GM13977 (cell line): ENCODE measurements at regions of chr17 and their contacts with region 1.

Region 1: DNA sequence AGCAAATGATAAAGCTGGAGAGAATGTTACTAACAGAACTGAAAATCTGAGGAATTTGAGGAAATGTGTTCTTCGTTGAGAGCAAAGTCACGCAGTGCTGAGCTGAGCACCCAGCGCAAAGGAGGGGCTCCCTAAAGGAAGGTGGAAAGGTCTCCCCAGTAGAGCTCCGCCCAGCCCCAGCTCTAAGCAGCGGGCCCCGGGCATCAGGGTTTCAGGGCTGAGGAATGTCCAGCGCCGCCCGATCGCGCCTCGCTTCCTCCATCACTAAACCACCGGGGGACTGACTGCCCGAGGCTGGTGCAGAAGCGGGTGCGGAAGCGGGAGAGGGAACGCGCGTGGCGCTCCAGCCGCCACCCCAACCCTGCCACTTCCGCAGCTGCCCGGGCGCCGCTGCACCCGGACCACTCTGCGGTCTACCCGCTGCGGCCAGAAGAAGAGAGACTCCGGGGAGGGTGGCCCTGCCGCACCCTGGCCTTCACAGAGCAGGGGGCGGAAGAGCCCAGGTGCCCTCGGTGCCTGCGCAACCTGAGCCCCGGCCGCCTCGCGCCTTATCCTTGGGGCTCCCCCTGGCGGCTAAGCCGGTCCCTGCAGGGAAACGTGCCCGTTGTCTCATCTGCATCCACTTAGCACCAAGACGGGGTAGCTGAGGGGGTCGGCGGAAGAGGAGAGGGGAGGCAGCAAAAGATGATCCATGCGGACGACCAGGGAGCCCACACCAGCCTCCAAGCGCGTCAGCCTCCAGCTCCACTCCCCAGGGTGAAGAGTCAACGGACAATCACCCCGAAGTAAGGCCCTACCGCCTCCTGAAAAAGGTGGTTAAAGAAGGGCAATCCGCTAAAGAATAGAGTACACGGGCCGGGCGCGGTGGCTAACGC is 12.4 kb upstream of the GUCY2D start:
- DNase-seq: peak; percentile 91
- CTCF ChIP-seq: peak; percentile 99

Region 2: DNA sequence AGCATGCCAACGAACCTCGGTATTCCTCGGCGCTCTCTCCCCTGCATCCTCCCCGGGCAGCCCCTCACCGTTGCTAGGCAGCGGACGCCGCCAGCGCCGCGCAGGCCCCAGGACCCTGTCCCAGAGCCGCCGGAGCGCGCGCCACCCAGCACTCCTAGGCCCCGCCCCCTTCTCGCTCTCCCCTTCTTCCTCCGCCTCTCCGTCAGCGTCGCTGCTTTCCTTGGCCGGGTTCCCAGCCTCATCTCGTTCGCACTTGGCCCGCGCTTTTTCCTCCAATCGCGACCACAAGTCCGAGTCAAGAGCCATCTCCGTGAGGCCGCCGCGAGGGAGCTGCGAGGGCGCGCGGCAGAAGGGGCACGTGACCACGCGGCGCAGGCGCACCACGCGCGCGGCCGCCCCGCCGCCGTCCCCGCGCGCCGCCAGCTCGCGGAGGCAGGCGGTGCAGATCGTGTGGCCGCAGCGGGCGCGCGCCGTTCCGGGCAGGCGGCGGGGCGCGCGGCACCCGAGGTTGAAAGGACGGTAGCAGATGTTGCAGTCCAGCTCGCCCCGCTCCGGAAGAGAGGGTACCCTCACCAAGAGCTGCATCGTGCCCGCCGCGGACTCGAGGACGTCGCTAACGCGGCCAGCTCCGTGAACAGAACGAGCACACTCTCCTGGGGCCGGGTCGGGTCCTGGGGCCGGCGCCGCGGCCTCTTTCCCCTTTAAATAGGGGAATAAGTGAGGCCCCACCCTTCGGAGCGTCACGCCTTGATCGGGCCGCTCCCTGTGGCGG is 74.2 kb before region 1 on chr17 and contains the start of gene RNF227:
- in situ Hi-C with region 1: loop called (anchors 10 kb)
- DNase-seq: peak; percentile 89
- CTCF ChIP-seq: no peak